Naive thymus-derived CD4-positive, alpha-beta T cell (primary cell): ENCODE measurements at regions of chr15 and their contacts with region 1.

Region 1: DNA sequence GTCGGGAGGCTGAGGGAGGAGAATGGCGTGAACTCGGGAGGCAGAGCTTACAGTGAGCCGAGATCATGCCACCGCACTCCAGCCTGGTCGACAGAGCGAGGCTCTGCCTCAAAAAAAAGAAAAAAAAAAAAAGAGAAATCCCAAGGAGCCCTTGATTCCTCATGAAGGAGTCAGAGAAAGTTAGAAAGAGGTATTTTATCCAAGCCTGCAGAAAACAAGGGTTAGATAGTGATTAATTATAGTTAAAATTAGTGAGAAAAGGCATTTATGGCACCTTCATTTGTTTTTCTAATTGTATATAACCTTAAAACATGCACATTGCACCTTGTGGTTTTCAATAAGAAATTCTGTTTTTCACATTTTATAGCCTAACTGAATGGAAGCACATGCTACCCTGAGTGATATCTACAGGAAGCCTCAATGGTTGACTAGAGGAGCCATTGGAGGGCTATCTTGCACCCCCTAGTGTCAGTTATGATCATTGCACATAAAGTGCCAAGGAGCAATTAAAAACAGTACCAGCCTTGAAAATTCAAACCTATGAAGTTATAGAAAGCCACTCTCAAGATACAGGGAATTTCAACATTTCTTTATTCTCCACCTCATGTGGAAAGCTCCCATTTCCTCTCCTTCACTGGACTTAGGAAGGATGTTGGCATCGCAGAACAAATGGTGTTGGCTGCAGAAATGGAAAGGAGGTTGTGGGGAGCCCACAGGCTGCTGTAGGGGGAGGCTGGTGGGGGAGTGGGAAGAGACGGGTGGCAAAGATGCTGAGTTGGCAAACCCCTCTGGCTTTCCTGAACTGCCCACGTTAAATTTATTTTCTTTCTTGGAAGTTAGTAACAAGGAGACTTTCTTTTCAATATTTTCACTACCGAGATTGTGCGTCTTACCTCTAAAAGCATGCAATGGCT is 48.5 kb downstream of the ITGA11 start:
- DNase-seq: peak in 8 of 9 donors; percentile 25 to 60 (median 36)
- ATAC-seq: peak; percentile 88
- H3K4me3 ChIP-seq: no peak overlapping the region
- H3K4me3 Mint-ChIP-seq: no peak overlapping the region
- H3K27ac ChIP-seq: no peak overlapping the region
- H3K27ac Mint-ChIP-seq: peak overlapping the region in 1 of 9 donors; percentile 66
- H3K4me1 ChIP-seq: peaks cover 0 to 7% of the 10 kb centered on the region in 2 donors
- H3K4me1 Mint-ChIP-seq: peaks cover 11 to 26% (median 14%) of the 10 kb centered on the region in 7 donors
- H3K27me3 ChIP-seq: no peaks in the 10 kb centered on the region
- H3K27me3 Mint-ChIP-seq: no peaks in the 10 kb centered on the region

Region 2: GRCh38 chr15:68328443-68328842 is 55.0 kb before region 1 on chr15:
- CTCF ChIA-PET with region 1: no interaction called
- POLR2A ChIA-PET with region 1: no interaction called
- intact Hi-C with region 1: loop called (anchors 1 to 5 kb)
- DNase-seq: peak in 3 of 9 donors; percentile 28 to 60 (median 32)
- ATAC-seq: peak; percentile 75
- H3K4me3 ChIP-seq: no peak overlapping the region
- H3K4me3 Mint-ChIP-seq: peak overlapping the region in 6 of 10 donors; percentile 3 to 74 (median 32)
- H3K27ac ChIP-seq: no peak overlapping the region
- H3K27ac Mint-ChIP-seq: peak overlapping the region in 2 of 9 donors; percentile 75 to 84
- H3K4me1 ChIP-seq: peaks cover 0 to 18% of the 10 kb centered on the region in 2 donors
- H3K4me1 Mint-ChIP-seq: peaks cover 29 to 38% (median 30%) of the 10 kb centered on the region in 7 donors
- H3K27me3 ChIP-seq: no peaks in the 10 kb centered on the region
- H3K27me3 Mint-ChIP-seq: peaks cover 0 to 29% (median 0%) of the 10 kb centered on the region in 5 donors

Region 3: DNA sequence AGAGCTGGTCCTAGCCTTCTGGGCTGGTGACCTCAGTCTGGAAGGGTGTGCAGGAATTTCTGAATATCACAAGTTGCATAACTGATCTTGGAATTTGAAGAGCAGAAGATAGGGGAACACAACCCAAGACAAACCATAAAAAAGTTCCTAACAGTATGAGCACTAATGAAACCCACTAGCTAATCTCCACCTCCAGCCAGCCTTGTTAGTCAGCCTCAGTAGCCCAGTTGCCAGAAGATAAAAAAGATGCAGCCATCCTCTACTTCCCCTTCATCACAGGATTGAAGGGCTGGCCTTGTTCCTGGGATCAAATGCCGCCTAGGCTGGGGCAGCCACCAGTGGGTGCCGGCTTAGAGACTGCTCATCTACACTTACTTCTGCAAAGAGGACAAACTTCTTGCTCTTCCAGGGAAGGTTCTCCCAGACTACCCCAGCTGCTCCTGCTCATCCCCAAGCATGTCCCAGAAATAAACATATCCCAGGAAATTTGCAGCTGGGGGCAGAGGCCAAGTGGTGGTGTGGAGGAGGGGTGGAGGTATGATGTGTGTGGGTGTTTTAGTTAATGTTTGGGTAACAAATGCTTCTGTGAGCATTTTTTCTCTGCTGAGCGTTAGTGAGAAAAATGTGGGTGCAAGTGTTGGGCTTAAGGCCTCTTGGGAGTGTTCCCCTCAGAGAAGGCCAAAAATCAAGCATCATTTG is 57.8 kb after region 1 on chr15:
- CTCF ChIA-PET with region 1: no interaction called
- POLR2A ChIA-PET with region 1: no interaction called
- intact Hi-C with region 1: no loop called
- DNase-seq: no peak
- ATAC-seq: no peak
- H3K4me3 ChIP-seq: no peak overlapping the region
- H3K4me3 Mint-ChIP-seq: no peak overlapping the region
- H3K27ac ChIP-seq: no peak overlapping the region
- H3K27ac Mint-ChIP-seq: no peak overlapping the region
- H3K4me1 ChIP-seq: no peaks in the 10 kb centered on the region
- H3K4me1 Mint-ChIP-seq: no peaks in the 10 kb centered on the region
- H3K27me3 ChIP-seq: no peaks in the 10 kb centered on the region
- H3K27me3 Mint-ChIP-seq: peaks cover 55 to 76% (median 68%) of the 10 kb centered on the region in 5 donors